ENCODE measurements at regions of chr3 and their contacts with region 1.

Region 1: DNA sequence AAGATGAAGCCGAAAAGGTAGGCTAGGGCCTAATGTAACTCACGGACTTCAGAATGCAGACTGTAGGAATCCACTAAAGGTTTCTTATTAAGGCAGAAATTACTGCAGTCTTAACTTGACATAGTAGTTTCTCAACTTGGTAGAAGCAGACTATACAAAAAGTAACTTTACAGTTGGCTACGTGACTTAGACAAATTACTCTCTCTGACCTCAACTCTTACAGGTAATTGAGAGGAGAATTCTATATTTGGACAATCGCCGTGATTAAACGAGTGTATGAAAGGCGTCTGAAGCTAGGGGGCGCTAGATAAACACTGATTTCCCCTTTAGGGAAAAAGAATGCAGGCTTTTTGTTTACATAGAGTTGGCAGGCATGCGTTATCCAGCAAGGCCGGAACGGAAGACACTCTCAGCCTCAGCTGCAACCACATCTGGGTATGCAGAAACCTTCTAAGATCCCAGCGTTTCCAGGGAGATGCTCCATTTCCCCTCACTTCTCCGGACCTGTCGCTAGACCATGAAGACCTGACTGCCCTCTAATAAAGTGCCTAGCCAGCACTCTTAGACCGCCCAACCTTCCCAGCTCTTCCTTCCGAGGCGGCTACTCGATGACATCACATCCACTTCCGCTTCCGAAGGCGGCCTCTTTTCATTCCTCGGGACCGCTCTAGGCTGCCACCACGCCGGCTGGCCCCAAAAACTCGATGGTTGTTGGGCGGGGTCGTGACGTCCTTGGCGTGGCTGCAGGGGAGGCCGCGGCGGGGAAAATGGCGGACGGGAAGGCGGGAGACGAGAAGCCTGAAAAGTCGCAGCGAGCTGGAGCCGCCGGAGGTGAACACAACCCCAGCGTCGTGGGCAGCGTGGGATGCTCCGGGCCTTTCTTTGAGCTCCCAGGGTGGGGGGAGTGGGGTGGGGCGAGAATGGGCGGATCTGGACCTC is at the start of gene PCNP:
- DNase-seq: peak; percentile 97
- ATAC-seq: peak; percentile 98
- H3K4me3 ChIP-seq: peak within 1 kb of the TSS; percentile 75 to 76
- H3K27ac ChIP-seq: peak within 1 kb of the TSS; percentile 96
- H3K4me1 ChIP-seq: peaks cover 30% of the 10 kb centered on the region
- H3K27me3 ChIP-seq: no peaks in the 10 kb centered on the region
- CTCF ChIP-seq: peak; percentile 95
- total RNA-seq, gene PCNP: 165 TPM

Region 2: DNA sequence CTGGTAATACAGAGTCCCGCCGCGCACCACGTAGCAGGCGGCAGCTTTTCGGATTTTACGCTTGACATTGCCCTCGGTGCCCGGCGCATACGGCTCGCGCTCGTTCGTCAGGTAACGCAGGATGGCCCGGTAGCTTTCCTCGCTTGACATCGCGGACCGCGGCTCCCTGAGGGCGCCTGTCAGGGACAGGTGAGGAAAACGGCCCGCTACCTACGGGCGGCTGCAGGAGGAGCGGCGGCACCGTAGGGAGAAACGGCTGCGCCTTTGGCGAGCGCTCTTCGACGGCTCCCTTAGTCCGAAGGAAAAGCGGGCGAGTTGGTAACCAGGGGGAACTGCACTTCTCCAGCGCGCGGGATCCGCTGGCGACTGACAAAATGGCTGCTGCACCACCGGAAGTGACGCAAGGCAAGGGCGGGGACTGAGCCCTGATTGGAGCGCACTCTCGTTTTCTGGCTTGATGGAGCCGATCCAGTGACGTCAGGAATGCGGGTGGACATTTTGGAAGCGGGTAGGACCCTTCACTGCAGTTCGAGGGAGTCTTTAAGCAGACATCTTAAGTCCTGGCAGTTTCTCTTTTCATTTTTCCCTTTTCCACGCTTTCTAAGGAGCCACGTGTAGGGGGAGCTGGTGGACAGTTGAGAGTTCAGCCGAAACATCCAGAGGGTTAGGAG is 103.2 kb after region 1 on chr3 and contains the start of gene ZBTB11:
- CTCF ChIA-PET with region 1: interaction called, 10 read pairs
- POLR2A ChIA-PET with region 1: interaction called, 4 read pairs
- in situ Hi-C with region 1: no loop called
- intact Hi-C with region 1: loop called (anchors 5 kb)
- DNase-seq: peak; percentile 99
- ATAC-seq: peak; percentile 88
- H3K4me3 ChIP-seq: peak within 1 kb of the TSS; percentile 88 to 89
- H3K27ac ChIP-seq: peak within 1 kb of the TSS; percentile 88
- H3K4me1 ChIP-seq: peaks cover 20% of the 10 kb centered on the region
- H3K27me3 ChIP-seq: no peaks in the 10 kb centered on the region
- CTCF ChIP-seq: peak; percentile 81
- total RNA-seq, gene ZBTB11: 20.1 TPM

Region 3: DNA sequence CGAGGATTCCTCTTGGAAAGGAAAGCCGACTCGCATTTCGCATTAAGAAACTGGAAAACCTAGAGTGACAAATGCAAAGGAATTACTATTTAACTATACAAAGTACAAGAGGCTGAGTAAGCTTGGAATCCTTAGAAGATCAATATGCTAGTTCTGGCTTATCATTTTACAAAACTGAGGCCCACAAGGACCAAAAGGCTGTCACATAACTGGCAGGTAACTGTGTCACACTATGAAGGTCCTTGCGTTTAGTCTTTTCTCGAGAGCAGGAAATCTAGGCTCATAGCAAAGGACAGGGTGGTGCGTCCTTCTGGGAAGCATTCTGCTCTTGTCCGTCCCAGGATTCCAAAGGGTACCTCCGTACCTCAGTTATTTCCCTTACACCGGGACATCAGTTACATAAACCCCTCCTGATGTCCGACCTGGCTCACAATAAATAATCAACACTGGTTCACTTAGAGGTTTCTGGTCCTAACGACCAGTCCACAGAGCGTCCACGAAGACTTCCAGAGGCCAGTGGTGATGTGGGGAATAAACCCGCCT is 112.2 kb after region 1 on chr3:
- CTCF ChIA-PET with region 1: interaction called, 10 read pairs
- POLR2A ChIA-PET with region 1: no interaction called
- in situ Hi-C with region 1: no loop called
- intact Hi-C with region 1: no loop called
- DNase-seq: no peak
- ATAC-seq: peak; percentile 2; the same call in 1 of the 2 replicates
- H3K4me3 ChIP-seq: peak overlapping the region; percentile 86 to 89
- H3K27ac ChIP-seq: peak overlapping the region; percentile 99
- H3K4me1 ChIP-seq: peaks cover 37% of the 10 kb centered on the region
- H3K27me3 ChIP-seq: no peaks in the 10 kb centered on the region
- CTCF ChIP-seq: no peak